Activated CD4-positive, alpha-beta memory T cell treated with anti-CD3 and anti-CD28 coated beads for 36 hours (primary cell): ENCODE measurements at regions of chr10 and their contacts with region 1.

Region 1: DNA sequence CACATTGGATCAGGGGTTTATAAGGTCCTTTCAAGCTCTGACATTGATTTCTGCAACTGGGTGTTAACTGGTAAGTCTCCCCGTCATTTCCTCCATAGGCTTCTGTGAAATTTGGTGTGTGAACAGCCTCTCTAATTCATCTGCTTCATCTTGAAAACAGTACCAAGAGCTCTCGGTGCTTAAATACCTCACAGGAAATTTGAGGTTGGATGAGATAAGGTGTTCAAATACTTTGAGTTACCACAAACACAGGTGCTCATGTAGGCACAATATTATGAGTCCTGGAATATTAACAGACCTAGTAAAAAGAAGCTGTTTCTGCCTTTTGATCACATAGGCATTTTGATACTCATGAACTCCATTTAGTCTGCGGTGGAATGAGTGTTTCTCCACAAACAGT is 85.2 kb downstream of the RTKN2 start:
- DNase-seq: peak; percentile 40
- H3K4me3 Mint-ChIP-seq: no peak overlapping the region
- H3K27ac Mint-ChIP-seq: peak overlapping the region; percentile 96
- H3K4me1 Mint-ChIP-seq: peaks cover 85% of the 10 kb centered on the region
- H3K27me3 Mint-ChIP-seq: no peaks in the 10 kb centered on the region

Region 2: GRCh38 chr10:61750929-61751471 is 432.4 kb before region 1 on chr10:
- CTCF ChIA-PET with region 1: no interaction called
- POLR2A ChIA-PET with region 1: no interaction called
- intact Hi-C with region 1: loop called (anchors 2 kb)
- DNase-seq: peak; percentile 84
- H3K4me3 Mint-ChIP-seq: no peak overlapping the region
- H3K27ac Mint-ChIP-seq: peak overlapping the region; percentile 44
- H3K4me1 Mint-ChIP-seq: peaks cover 24% of the 10 kb centered on the region
- H3K27me3 Mint-ChIP-seq: no peaks in the 10 kb centered on the region

Region 3: GRCh38 chr10:61793760-61794703 is 389.4 kb before region 1 on chr10:
- CTCF ChIA-PET with region 1: no interaction called
- POLR2A ChIA-PET with region 1: no interaction called
- intact Hi-C with region 1: no loop called
- DNase-seq: no peak
- H3K4me3 Mint-ChIP-seq: no peak overlapping the region
- H3K27ac Mint-ChIP-seq: no peak overlapping the region
- H3K4me1 Mint-ChIP-seq: no peaks in the 10 kb centered on the region
- H3K27me3 Mint-ChIP-seq: no peaks in the 10 kb centered on the region

Region 4: DNA sequence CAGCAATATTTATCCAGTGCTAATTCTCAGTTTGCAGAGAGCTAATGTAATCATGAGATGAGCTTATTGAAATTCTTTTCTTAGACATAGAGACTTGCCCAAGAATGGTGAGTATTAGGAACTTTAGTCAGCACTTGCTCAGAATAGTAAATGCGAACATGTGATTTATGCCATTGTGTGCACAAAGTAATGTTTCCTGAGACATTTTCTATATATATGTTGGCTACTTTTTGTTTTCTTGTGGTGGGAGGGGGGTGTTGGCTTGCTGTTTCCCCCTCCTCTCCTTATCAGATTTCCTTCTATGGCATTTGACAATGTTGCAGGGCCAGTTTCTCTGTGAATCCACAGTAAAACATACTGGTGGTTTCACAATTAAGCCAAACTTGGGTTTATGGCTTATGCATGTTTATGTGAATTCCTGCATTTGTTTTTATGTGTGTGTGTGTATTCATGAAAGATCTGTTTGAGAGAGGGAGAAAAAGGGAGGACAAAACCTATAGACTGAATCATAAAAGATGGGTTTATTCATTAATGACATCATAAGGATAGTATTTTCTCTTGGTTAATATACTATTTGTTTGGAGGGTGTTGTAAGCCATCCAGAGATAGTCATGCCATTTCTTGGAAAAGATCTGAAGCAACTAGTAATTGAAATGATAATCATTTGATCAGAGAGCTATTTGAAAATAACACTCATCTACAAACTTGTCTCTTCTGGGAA is 245.7 kb before region 1 on chr10:
- CTCF ChIA-PET with region 1: no interaction called
- POLR2A ChIA-PET with region 1: interaction called, 10 read pairs
- intact Hi-C with region 1: loop called (anchors 1 kb)
- DNase-seq: peak; percentile 30
- H3K4me3 Mint-ChIP-seq: peak overlapping the region; percentile 74
- H3K27ac Mint-ChIP-seq: peak overlapping the region; percentile 92
- H3K4me1 Mint-ChIP-seq: peaks cover 88% of the 10 kb centered on the region
- H3K27me3 Mint-ChIP-seq: no peaks in the 10 kb centered on the region

Region 5: DNA sequence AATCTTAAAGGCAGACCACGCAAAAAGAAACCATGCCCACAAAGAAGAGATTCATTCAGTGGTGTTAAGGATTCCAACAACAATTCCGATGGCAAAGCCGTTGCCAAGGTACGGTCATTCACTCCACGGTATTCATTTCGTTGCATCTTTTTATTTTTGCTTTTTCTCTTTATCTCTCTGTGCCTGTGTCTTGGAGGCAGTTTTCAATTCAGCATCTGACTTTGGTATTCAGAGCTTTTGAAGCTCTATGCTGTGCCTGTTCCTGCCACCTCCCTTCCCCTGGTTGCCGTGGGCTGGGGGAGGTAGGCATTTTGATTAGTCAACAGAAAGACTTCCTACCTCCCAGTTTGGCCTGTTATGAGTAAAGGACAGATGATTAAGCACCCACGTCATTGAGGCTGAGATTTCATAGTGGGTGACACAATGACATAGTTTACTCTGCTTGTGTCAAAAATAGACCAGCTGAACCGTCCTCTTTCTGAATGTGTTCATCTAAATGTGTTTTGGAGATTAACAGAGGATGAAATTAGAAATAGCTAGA is 132.5 kb before region 1 on chr10:
- CTCF ChIA-PET with region 1: interaction called, 7 read pairs
- POLR2A ChIA-PET with region 1: interaction called, 225 read pairs
- intact Hi-C with region 1: loop called (anchors 1 kb)
- DNase-seq: peak; percentile 91
- H3K4me3 Mint-ChIP-seq: peak overlapping the region; percentile 94
- H3K27ac Mint-ChIP-seq: peak overlapping the region; percentile 96
- H3K4me1 Mint-ChIP-seq: peaks cover 71% of the 10 kb centered on the region
- H3K27me3 Mint-ChIP-seq: no peaks in the 10 kb centered on the region

Region 6: DNA sequence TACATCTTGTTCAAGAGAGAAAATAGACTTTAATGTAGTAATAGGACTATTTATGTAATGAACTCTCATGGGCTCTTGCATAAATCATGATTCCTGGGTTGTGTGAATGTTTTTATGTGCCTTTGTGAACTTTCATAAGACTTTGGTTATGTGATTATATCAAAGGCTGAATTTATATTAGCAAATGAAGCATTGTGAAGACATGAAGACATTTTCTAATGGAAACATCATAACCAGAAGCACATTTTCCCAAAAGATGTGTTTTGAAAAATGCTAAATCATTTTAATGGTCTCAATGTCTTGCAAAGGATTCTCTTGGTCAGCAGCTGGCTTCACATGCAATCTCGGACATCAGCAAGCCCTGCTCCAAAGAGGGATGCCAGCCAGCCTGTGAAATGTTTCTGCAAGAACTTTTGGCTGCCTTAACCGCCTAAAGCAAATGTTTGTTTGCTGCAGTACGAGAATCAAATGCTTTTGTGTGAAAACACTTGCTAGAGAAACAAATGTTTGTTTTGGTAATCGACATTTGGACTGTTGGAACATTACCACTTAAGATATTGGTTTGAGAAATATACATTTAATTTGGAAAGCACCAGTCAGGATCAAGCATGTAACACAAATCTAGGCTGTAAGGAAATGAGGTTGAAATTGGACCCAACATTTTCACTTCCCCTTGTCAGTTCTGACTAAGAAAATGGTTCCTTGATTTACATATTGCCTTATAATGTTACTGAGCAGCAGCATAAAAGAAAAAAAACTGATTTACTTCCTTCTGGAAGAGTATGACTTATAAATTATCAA is 16.9 kb before region 1 on chr10:
- CTCF ChIA-PET with region 1: no interaction called
- POLR2A ChIA-PET with region 1: no interaction called
- intact Hi-C with region 1: no loop called
- DNase-seq: no peak
- H3K4me3 Mint-ChIP-seq: no peak overlapping the region
- H3K27ac Mint-ChIP-seq: no peak overlapping the region
- H3K4me1 Mint-ChIP-seq: peaks cover 8% of the 10 kb centered on the region
- H3K27me3 Mint-ChIP-seq: no peaks in the 10 kb centered on the region

Region 7: DNA sequence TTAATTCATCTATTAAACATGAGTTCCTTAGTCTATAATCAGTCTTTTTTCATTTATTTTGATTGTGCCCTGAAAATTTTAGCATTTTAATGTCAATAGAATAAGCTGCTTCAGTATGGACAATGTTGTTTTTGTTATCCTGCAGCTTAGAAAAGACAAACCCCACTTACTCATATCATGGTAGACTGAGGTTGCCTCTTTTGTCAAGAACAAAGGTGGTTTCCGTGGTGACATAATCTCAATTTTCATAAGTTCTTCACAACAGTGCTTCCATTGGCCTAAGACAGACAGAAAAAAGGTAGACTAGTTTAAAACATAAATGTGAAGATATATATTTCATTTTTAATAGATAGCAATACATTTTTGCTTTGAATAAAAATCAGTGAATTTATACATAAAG is 16.1 kb after region 1 on chr10:
- CTCF ChIA-PET with region 1: no interaction called
- POLR2A ChIA-PET with region 1: interaction called, 6 read pairs
- intact Hi-C with region 1: loop called (anchors 1 kb)
- DNase-seq: no peak
- H3K4me3 Mint-ChIP-seq: no peak overlapping the region
- H3K27ac Mint-ChIP-seq: peak overlapping the region; percentile 35
- H3K4me1 Mint-ChIP-seq: peaks cover 27% of the 10 kb centered on the region
- H3K27me3 Mint-ChIP-seq: no peaks in the 10 kb centered on the region

Region 8: DNA sequence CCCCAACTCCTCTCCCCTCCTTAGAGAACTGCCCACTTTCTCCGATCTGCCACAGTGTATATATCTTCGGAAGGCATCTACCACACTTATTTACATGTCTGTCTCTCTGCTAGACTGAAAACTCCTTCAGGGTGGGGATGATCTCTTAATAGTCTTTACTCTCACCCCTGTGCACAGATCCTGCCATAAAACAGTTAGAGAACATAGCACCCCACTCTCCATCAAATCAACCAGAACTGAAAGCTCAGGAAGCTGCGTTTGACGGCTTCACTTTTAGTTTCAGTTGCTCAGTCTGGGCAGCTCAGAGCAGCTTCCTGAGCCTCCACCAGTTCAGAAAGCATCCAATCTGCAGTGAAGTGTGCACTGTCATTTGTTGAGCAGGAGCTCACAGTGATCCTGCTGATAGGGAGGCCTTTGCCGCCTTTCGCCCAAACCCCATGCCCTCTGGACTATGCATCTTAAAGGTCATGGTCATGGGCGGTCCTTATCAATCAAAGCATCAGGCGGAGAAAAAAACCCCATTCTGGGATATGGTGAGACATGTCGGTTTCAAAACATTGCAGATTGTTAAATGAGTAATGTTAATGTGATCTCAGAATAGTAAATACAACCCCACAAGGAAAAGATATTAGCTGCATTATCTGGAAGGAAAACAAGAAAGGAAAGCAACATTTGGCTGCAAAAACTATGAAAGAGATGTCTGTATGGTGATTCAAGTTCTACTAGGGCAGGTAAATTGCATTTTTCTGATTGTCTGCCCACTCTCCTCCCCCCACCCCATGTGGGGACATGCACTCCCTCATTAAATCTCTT is 454.0 kb after region 1 on chr10:
- CTCF ChIA-PET with region 1: no interaction called
- POLR2A ChIA-PET with region 1: no interaction called
- intact Hi-C with region 1: loop called (anchors 5 kb)
- DNase-seq: peak; percentile 84
- H3K4me3 Mint-ChIP-seq: no peak overlapping the region
- H3K27ac Mint-ChIP-seq: no peak overlapping the region
- H3K4me1 Mint-ChIP-seq: peaks cover 26% of the 10 kb centered on the region
- H3K27me3 Mint-ChIP-seq: no peaks in the 10 kb centered on the region

Region 9: DNA sequence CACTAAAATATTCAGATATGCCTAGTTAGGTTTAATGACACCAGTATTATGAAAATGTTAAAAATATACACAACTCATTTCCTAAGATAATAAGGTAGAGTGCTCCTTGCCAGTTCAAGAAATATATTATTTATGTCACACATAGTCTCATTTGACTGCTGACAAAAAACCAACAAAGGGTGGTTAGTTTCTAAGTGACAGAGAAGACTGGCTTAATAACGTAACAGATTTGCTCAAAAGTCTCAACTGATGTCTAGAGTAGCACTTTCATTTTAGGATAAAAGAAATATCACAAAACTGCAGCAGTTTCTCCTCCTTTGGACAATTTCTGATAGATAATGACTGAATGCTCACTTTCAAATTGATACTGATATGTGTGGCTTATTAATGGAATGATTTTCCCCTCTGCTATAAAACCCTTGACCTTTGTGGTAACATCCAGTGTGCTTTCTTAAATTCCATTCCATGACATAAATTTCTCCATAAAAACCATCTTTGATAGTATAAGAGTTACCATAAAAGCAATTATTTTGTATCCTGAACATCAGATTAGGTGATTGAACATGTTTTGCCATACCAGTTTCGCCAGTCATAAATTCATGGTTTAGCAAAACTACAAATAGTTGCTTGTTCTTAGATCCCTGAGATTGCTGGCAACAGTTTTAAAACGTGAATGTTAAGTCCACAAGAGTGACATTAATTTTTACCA is 1043.9 kb after region 1 on chr10:
- CTCF ChIA-PET with region 1: no interaction called
- POLR2A ChIA-PET with region 1: no interaction called
- intact Hi-C with region 1: loop called (anchors 5 kb)
- DNase-seq: no peak
- H3K4me3 Mint-ChIP-seq: peak overlapping the region; percentile 47
- H3K27ac Mint-ChIP-seq: peak overlapping the region; percentile 80
- H3K4me1 Mint-ChIP-seq: peaks cover 50% of the 10 kb centered on the region
- H3K27me3 Mint-ChIP-seq: no peaks in the 10 kb centered on the region